ENCODE measurements at regions of chr5 and their contacts with region 1.

Region 1: GRCh38 chr5:172714491-172715421 is 56.2 kb downstream of the DUSP1 start:
- DNase-seq: peak; percentile 60
- H3K4me3 ChIP-seq: no peak overlapping the region
- H3K27ac ChIP-seq: peak overlapping the region; percentile 29 to 35
- H3K4me1 ChIP-seq: no peaks in the 10 kb centered on the region
- H3K27me3 ChIP-seq: no peaks in the 10 kb centered on the region
- CTCF ChIP-seq: peak; percentile 60 to 85 (median 76)
- POLR2A ChIP-seq: no peak

Region 2: DNA sequence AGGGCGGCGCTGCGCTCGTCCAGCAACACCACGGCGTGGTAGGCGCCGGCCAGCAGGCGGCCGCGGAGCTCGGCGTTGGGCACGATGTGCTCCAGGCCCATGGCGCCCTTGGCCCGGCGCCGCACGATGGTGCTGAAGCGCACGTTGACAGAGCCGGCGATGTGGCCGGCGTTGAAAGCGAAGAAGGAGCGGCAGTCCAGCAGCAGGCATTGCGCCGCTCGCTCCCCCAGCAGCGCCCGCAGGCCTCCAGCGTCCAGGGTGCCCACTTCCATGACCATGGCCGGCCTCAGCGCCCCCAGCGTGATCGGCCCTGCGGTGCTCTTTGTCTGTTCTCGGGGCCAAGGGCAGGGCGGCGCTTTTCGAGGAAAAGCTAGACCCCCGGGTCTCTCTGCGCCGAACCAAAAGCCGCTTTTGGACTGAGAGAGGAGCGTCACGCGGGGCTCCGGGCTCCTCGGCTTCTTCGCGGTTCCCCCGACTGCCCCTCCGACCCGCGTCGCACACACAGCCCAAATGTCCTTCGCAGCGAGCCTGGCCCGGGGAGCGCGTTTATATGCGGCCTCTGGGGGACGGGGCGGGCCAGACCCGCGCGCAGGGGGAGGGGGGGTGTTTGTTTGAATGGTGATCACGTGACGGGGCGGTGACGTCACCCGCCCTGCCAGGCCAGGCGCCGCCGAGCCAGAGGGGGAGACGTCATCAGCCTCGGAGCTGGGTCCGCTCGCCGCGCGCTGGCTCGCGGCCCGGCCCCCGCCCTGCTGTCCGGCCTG is 56.1 kb after region 1 on chr5 and contains the start of gene DUSP1:
- intact Hi-C with region 1: loop called (anchors 2 kb)
- DNase-seq: peak; percentile 99
- H3K4me3 ChIP-seq: peak within 1 kb of the TSS; percentile 76 to 92
- H3K27ac ChIP-seq: peak within 1 kb of the TSS; percentile 98 to 100
- H3K4me1 ChIP-seq: peaks cover 17% of the 10 kb centered on the region
- H3K27me3 ChIP-seq: no peaks in the 10 kb centered on the region
- CTCF ChIP-seq: peak in 2 of 4 experiments; percentile 63 to 64
- POLR2A ChIP-seq: peak; percentile 99
- total RNA-seq, gene DUSP1: 559 to 659 TPM

Region 3: GRCh38 chr5:172902497-172903200 is 187.9 kb after region 1 on chr5:
- intact Hi-C with region 1: loop called (anchors 1 kb)
- DNase-seq: peak; percentile 49
- H3K4me3 ChIP-seq: no peak overlapping the region
- H3K27ac ChIP-seq: peak overlapping the region; percentile 95 to 96
- H3K4me1 ChIP-seq: peaks cover 39% of the 10 kb centered on the region
- H3K27me3 ChIP-seq: no peaks in the 10 kb centered on the region
- CTCF ChIP-seq: peak in 3 of 4 experiments; percentile 24 to 61 (median 44)
- POLR2A ChIP-seq: no peak

Region 4: DNA sequence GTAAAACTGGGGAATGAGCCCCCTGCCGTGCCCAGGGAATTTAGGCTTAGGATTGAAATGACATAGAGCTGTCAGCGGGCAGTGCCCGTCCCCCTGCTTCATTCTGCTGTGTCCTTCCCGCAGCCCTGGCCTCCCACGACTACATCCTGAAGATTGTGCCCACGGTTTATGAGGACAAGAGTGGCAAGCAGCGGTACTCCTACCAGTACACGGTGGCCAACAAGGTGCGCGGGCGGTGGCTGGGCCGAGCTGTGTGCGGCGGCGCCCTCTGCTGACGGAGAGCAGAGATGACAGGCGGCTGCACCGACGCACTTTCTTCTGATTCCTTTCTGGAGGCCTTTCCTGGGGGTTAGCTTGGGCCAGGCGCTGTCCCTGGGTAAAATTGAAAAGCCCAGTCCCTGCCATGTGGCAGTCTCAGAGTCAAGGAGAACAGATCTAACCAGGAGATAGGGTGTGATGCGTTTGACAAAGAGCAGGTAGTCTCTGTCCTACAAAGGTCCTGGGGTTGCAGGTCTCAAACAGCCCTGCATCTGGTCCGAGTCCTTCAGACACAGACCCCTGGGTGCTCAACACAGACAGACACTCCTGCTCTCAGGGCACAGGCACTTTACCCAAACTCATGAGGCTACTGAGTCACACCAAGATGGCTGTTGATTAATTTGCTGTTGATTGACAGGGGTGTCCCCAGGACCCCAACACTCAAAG is 217.7 kb after region 1 on chr5:
- intact Hi-C with region 1: loop called (anchors 2 kb)
- DNase-seq: peak; percentile 74
- H3K4me3 ChIP-seq: no peak overlapping the region
- H3K27ac ChIP-seq: peak overlapping the region; percentile 35 to 67
- H3K4me1 ChIP-seq: no peaks in the 10 kb centered on the region
- H3K27me3 ChIP-seq: no peaks in the 10 kb centered on the region
- CTCF ChIP-seq: peak; percentile 92 to 99 (median 97)
- POLR2A ChIP-seq: no peak

Region 5: DNA sequence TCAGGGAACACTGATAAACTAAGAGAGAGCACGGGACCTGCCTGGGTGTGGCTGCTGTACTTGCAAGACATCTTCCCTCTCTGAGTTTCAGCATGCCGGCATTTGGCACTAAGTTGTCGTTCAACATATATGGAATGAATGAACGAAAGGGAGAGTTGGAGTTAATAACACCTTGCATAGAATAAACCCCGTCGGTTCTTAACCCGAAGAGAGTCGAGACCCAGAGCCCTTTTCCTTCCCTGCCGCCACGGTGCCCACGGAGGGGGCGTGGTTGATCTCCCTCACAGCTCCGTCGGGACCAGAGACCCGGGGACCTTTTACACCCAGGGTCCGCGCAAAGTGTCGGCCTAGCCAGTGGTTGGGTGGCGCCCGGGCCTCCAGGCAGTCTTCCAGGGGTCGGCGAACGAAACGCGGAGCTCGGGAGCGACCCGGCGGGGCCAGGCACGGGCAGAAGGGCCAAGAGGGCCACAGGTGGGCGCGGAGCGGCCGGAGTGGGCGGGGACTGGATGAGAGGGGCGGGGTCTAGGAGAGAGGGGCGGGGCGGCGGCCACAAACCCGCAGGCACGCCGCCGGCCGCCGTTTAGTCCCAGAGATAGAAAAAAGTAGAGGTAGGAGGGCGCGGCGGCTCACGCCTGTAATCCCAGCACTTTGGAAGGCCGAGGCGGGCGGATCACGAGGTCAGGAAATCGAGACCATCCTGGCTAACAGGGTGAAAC is 243.7 kb after region 1 on chr5:
- intact Hi-C with region 1: no loop called
- DNase-seq: peak; percentile 47
- H3K4me3 ChIP-seq: peak overlapping the region; percentile 52 to 62
- H3K27ac ChIP-seq: peak overlapping the region; percentile 73 to 74
- H3K4me1 ChIP-seq: peaks cover 3% of the 10 kb centered on the region
- H3K27me3 ChIP-seq: no peaks in the 10 kb centered on the region
- CTCF ChIP-seq: no peak
- POLR2A ChIP-seq: no peak

Region 6: DNA sequence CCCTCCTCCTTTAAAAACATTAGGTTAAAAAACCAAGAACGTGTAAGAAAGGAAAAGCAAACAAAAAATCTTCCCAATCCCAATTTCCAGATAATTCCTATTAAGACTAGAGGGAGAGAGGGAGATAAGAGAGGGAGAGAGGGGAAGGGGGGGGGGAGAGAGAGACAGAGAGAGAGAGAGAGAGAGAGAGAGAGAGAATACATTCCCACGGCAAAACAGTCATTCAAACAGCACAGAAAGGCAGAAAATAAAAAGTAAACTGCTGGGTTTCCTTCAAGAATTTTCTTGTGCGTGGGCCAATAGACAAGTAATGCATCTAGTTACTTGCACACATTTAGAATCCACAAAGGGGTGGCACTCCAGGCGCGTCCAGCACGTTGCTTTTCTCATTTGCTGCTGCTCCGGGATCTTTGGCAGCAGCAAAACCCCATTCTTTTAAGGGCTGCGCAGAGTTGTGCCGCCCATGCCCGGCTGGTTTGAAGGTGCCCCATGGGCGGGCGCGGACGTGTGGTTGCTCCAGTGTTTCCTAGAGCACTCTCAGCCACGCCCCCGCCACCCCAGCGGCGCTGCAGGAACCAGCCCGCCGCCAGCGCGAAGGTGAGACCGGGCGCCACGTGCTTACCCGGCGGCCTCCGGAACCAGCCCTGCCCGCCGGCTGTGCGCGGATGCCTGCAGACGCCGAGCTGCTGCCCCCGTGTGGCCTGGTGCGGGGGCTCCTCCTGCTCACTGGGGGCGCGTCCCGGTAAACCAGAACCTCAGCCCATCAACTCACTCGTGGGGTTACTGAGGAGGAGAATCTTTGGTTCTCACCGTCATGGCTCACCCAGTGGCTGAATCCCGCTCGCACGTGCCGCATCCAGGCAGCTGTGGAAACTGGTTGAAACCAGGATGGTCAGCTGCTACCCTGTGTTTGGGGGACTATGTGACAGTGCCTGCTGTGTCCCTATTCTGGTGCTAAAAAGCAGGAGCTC is 568.8 kb after region 1 on chr5:
- intact Hi-C with region 1: loop called (anchors 10 kb)
- DNase-seq: peak; percentile 65
- H3K4me3 ChIP-seq: peak overlapping the region in 1 of 2 donors; percentile 13
- H3K27ac ChIP-seq: no peak overlapping the region
- H3K4me1 ChIP-seq: no peaks in the 10 kb centered on the region
- H3K27me3 ChIP-seq: no peaks in the 10 kb centered on the region
- CTCF ChIP-seq: peak; percentile 39 to 84 (median 70)
- POLR2A ChIP-seq: no peak